GM10248 (cell line): ENCODE measurements at regions of chr22 and their contacts with region 1.

Region 1: DNA sequence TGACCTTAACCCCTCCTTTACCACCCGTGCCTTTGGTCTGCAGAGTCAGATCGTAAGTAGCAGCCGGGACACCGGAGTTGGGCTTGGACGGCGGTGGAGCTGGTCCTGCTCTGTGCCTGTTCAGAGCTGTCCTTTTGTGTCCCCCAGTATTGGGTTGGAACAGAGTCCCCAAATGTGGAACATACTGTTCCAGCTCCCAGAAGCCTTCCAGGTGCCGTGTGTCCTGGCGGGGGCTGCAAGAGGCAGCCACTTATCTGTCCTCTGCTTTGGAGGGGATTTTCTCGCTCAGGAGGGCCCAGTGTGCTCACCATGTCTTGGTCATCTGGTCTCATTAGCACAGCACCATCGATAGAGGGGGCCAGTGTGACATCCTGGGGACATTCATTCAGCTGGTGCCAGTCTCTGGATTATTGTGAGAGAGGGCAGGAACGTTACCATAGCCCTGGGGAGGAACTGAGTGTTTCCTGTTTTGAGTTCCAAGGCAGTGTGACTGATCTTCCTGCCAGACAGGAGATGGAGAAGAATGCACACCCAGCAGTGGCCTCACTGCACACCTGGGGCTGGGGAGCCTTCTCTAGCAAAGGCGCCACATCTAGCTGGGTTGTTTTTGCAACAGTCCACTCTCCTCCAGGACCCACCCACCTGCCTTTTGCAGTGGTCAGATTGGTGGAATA is 12.4 kb downstream of the CRELD2 start:
- DNase-seq: peak; percentile 63
- CTCF ChIP-seq: peak; percentile 80

Region 2: GRCh38 chr22:49954375-49954774 is 23.5 kb after region 1 on chr22:
- CTCF ChIA-PET with region 1: interaction called, 12 read pairs
- POLR2A ChIA-PET with region 1: no interaction called
- DNase-seq: no peak
- CTCF ChIP-seq: no peak

Region 3: DNA sequence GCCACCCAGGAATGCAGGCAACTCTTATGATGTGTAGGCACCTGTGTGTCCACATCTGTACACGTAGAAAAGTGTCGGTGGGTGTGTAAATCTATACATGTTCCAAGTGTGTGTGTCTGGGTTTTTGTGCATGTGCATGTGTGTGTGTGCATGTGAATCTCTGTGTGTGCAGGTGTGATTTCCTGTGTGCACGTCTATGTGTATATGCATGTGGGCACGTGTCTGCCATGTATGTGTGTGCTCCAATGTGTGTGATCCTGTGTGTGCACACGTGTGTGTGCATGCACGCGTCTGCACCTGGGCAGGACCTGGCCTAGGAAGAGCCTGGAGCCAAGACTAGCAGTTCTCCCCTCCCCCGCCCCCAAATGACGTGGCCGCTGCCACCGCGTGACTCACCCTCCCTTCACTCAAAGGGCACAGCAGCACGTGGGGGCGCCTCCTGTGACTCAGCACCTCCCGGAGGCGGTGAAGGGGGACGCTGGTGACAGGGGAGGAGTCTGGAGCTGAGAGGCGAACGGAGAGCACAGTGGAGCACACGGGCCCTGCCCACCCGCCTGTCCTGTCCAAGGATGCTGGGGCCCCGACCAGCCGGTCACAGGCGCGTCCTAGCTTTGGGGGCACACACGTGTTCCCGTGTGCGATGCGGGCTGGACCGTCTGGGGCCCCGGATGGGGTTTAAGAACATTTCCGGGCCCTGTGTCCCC is 39.8 kb after region 1 on chr22:
- CTCF ChIA-PET with region 1: interaction called, 32 read pairs
- POLR2A ChIA-PET with region 1: interaction called, 3 read pairs
- DNase-seq: peak; percentile 89
- CTCF ChIP-seq: no peak

Region 4: GRCh38 chr22:50016988-50017700 is 86.3 kb after region 1 on chr22:
- CTCF ChIA-PET with region 1: interaction called, 12 read pairs
- POLR2A ChIA-PET with region 1: no interaction called
- DNase-seq: peak; percentile 88
- CTCF ChIP-seq: no peak

Region 5: DNA sequence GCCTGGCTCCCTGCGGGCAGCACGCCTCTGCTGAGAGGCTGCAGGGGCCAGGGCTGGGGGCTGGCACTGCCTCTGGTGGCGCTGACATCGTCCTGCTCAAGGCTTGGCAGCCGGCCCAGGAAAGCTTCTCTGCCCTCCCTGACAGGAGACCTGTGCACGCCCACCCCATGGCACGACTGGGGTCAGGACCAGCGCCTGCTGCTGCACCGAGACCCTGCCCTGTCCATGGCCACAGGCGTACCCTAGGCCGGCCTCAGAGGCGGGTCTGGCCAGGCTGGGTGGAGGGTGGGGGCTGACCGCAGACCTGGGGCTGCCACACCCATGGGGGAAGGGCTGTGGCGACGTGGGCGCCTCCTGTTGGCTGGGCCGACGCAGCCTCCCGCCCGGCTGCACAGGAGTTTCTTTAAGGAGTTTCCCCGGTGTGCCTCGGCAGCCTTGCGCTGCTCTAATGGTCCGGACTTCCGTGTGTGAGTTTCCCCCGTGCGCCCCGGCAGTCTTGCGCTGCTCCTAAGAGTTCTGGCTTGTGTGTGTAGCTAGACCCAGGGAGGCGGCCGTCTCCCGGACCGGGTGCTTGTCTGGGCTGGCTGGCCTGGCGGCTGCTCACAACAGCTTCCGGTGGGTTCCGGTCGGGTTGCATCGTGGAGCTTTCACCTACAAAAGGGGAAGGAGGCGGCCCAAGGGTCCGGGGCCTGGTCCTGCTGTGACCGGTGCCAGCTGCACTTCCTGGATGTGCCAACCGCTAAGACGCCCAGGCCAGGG is 259.5 kb after region 1 on chr22:
- CTCF ChIA-PET with region 1: interaction called, 11 read pairs
- POLR2A ChIA-PET with region 1: no interaction called
- DNase-seq: peak; percentile 85
- CTCF ChIP-seq: peak; percentile 52